Caco-2 (cell line): ENCODE measurements at regions of chr7 and their contacts with region 1.

Region 1: DNA sequence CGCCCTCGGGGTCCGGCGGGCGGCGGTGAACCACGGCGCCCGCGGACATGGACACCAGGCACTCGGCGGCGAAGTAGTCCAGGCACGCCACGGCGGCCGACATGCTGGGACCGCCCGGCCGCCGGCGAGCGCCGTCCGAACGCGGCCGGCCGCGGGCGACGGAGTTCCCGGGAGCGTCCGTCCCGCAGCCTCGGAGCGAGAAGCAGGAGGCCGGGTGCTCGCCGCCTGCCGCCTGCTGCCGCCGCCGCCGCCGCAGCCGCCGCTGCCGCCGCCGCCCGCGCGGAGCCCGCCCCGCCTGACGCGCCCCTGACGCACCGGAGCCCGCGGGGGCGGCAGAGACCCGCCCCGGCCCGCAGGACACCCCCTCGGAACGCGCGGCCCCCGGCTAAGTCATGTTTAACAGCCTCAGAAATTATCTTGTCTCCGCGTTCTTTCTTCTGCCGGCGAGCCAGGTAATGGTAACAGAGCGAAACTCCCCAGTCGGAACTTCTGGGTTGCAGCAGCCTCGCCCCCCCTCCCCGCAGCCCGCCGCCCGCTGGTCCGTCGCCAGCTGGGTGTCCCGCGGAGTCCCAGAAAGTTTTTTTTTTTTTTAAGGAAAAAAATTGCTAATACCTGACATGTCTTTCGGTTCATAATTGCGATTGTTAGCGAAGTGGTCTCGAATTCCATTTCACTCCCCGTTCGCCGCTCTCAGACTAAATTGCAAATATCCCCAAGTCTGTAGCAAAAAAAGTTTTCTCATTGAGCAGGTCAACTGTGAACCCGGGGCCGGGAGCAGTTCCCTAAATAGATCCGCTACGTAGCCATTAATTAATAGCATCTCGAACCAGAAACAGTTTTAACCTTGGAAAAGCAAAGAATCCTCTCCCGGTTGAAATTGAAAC is at the start of gene KLF14:
- DNase-seq: peak in 1 of 2 experiments; percentile 46
- H3K4me3 ChIP-seq: peak within 1 kb of the TSS; percentile 71
- H3K4me3 Mint-ChIP-seq: peak within 1 kb of the TSS; percentile 74
- H3K27ac Mint-ChIP-seq: no peak within 1 kb of the TSS
- H3K4me1 ChIP-seq: peaks cover 5% of the 10 kb centered on the region; the same call in 1 of the 2 replicates
- H3K4me1 Mint-ChIP-seq: no peaks in the 10 kb centered on the region
- H3K27me3 ChIP-seq: 0 out of 2 replicates have a peak, but pooled peaks cover 2% of the 10 kb centered on the region
- H3K27me3 Mint-ChIP-seq: peaks cover 28% of the 10 kb centered on the region
- CTCF ChIP-seq: peak in 1 of 2 experiments; percentile 1
- total RNA-seq, gene KLF14: 0.14 TPM in 1 of 2 replicates, not detected in the other

Region 2: GRCh38 chr7:130595986-130596385 is 138.2 kb before region 1 on chr7:
- CTCF ChIA-PET with region 1: no interaction called
- POLR2A ChIA-PET with region 1: no interaction called
- intact Hi-C with region 1: no loop called
- DNase-seq: no peak
- H3K4me3 ChIP-seq: no peak overlapping the region
- H3K4me3 Mint-ChIP-seq: no peak overlapping the region
- H3K27ac Mint-ChIP-seq: no peak overlapping the region
- H3K4me1 ChIP-seq: no peaks in the 10 kb centered on the region
- H3K4me1 Mint-ChIP-seq: no peaks in the 10 kb centered on the region
- H3K27me3 ChIP-seq: no peaks in the 10 kb centered on the region
- H3K27me3 Mint-ChIP-seq: no peaks in the 10 kb centered on the region
- CTCF ChIP-seq: no peak

Region 3: GRCh38 chr7:130683026-130683425 is 51.1 kb before region 1 on chr7:
- CTCF ChIA-PET with region 1: no interaction called
- POLR2A ChIA-PET with region 1: no interaction called
- intact Hi-C with region 1: no loop called
- DNase-seq: no peak
- H3K4me3 ChIP-seq: no peak overlapping the region
- H3K4me3 Mint-ChIP-seq: no peak overlapping the region
- H3K27ac Mint-ChIP-seq: no peak overlapping the region
- H3K4me1 ChIP-seq: no peaks in the 10 kb centered on the region
- H3K4me1 Mint-ChIP-seq: no peaks in the 10 kb centered on the region
- H3K27me3 ChIP-seq: no peaks in the 10 kb centered on the region
- H3K27me3 Mint-ChIP-seq: peaks cover 10% of the 10 kb centered on the region
- CTCF ChIP-seq: no peak

Region 4: GRCh38 chr7:130758429-130759056 is 24.4 kb after region 1 on chr7:
- CTCF ChIA-PET with region 1: interaction called, 17 read pairs
- POLR2A ChIA-PET with region 1: interaction called, 4 read pairs
- intact Hi-C with region 1: loop called (anchors 1 kb)
- DNase-seq: peak in 1 of 2 experiments; percentile 28
- H3K4me3 ChIP-seq: no peak overlapping the region
- H3K4me3 Mint-ChIP-seq: no peak overlapping the region
- H3K27ac Mint-ChIP-seq: no peak overlapping the region
- H3K4me1 ChIP-seq: no peaks in the 10 kb centered on the region
- H3K4me1 Mint-ChIP-seq: no peaks in the 10 kb centered on the region
- H3K27me3 ChIP-seq: no peaks in the 10 kb centered on the region
- H3K27me3 Mint-ChIP-seq: peaks cover 13% of the 10 kb centered on the region
- CTCF ChIP-seq: peak; percentile 65 to 69

Region 5: DNA sequence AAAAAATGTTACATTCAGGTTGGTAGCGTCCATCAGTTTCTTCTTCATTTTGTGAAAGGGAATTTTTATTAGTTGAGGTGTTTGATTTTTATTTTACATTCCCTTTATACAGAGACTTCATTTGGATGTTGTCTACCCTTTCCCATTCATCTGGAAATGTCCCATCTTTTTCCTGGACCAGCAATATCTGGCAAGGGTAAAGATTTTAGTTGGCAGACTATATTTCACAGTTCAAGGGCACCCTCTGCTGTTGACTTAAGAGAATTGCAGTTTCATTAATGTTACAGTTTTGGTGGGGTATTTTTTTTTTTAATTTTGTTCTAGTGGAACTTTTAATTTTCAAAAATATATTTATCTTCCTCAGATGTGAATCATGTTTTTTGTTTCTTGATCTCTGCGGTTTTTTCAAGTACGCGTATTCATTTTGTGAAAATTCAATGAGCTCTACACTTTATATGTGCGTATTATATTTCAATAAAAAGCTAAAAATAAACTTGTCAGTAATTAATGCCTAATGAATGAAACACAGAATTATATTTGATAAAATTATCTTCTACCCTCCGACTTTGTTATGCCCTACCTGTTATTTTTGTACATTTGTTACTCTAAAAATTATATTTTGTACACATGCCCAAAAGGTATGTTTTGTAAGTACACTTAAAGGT is 97.8 kb after region 1 on chr7:
- CTCF ChIA-PET with region 1: no interaction called
- POLR2A ChIA-PET with region 1: no interaction called
- intact Hi-C with region 1: loop called (anchors 5 kb)
- DNase-seq: peak in 1 of 2 experiments; percentile 29
- H3K4me3 ChIP-seq: no peak overlapping the region
- H3K4me3 Mint-ChIP-seq: no peak overlapping the region
- H3K27ac Mint-ChIP-seq: no peak overlapping the region
- H3K4me1 ChIP-seq: no peaks in the 10 kb centered on the region
- H3K4me1 Mint-ChIP-seq: no peaks in the 10 kb centered on the region
- H3K27me3 ChIP-seq: no peaks in the 10 kb centered on the region; the same call in 1 of the 2 replicates
- H3K27me3 Mint-ChIP-seq: peaks cover 8% of the 10 kb centered on the region
- CTCF ChIP-seq: peak; percentile 68 to 72